Motor neuron (in vitro differentiated cells): ENCODE measurements at regions of chr9 and their contacts with region 1.

Region 1: DNA sequence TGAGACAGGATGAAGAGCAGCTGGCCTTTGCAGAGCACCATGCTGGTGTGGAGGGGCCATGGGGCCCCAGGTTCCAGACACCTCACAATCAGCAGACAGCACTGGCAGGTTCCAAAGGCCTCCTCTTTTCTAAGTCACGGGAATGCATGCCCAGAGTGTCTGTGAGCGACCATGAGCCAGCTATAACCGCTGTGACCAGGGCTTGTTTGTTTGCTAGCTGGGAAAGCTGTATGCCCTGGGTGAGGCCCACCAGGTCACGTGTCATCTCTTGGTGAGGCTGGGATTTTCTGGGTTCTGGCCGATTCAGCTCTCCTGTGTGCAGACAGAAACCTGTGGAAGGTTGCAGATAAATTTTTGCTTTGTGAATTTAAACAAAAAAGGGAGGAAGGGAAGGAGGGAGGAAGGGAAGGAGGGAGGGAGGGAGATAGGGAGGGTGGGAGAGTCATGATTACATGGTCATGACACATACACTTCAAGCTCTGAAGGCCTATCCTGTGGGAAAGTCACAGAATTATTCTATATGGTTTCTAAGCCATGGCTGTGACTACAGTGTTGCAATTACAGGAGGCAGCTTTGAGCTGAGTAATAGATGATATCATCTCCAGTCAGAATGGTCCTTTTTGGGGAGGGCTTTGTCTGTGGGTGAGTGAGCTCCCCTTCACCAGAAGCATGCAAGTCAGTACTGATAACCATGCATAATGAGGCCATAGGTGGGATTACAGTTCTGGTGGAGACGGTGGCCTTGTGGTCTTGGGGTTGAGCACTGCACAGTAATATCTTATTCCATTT is 37.2 kb downstream of the PAPPA start:
- ATAC-seq: peak in 7 of 8 experiments; percentile 37 to 93 (median 68)
- H3K4me3 ChIP-seq: no peak overlapping the region
- H3K27ac ChIP-seq: no peak overlapping the region
- H3K4me1 ChIP-seq: no peaks in the 10 kb centered on the region

Region 2: DNA sequence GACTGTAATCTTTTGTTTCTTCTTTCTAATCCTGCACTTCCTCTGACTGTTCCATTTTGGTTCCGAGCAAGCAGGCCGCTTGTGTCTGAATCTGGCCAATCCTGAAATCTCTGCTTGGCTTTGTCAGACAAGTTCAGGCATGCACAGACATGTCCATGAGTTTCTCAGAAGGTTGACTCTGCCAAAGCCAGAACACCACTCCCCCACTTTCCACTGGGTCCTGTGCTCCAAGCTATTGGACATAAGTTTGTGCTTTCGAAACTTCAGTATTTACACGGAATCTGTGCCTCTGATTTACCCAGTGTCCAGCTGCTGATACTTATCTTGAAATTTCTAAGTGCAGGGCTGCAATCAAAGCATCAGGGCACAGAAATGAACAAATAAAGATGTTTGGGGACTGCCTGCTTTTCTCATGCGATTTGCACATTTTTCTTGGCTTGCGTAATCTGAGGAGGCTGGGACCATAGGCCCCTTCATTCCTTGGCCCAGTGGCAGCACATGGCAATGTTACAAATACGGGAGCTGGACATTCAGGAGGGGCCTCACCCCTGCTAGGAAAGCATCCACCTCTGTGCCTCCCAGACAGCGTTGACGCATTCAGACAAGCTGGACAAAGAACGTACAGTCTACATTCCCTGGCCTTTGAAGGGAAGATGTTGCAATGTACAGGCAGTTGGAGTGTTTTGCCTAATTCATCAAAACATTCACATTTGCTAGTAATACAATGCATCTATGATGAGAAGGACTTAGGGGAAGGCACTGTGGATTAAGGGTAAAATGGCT is 246.5 kb before region 1 on chr9:
- in situ Hi-C with region 1: no loop called
- ATAC-seq: peak; percentile 70 to 86 (median 84)
- H3K4me3 ChIP-seq: no peak overlapping the region
- H3K27ac ChIP-seq: peak overlapping the region in 1 of 2 donors; percentile 33
- H3K4me1 ChIP-seq: peaks cover 10 to 17% of the 10 kb centered on the region in 2 donors

Region 3: GRCh38 chr9:116288658-116289057 is 97.8 kb after region 1 on chr9:
- in situ Hi-C with region 1: loop called in 1 of 9 experiments (anchors 25 kb)
- ATAC-seq: peak in 2 of 8 experiments; percentile 85 to 96
- H3K4me3 ChIP-seq: no peak overlapping the region
- H3K27ac ChIP-seq: no peak overlapping the region
- H3K4me1 ChIP-seq: peaks cover 13 to 17% of the 10 kb centered on the region in 2 donors

Region 4: DNA sequence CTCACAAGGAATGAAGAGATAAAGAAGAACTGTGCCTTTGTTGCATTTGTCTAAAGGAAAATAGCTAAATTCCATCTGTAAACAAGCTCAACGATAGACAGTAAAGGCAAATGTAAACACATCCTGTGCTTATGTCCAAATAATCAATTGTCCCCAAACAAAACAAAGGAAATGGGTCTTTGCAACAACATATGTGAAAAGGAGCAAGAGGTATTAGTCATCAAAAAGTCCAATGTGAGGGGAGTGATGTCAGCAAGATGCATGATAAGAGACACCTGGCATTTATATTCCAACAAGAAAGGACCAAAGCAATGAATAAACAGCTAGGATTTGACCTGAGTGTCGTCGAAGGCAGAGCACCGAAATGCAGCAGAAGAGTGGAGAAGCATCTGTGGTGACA is 1015.0 kb after region 1 on chr9:
- in situ Hi-C with region 1: no loop called
- ATAC-seq: no peak
- H3K4me3 ChIP-seq: no peak overlapping the region
- H3K27ac ChIP-seq: no peak overlapping the region
- H3K4me1 ChIP-seq: no peaks in the 10 kb centered on the region